MCF 10A (cell line): ENCODE measurements at regions of chr9 and their contacts with region 1.

Region 1: GRCh38 chr9:20593551-20593950 is 28.7 kb downstream of the MLLT3 start:
- DNase-seq: peak; percentile 8
- H3K4me3 Mint-ChIP-seq: no peak overlapping the region
- H3K27ac Mint-ChIP-seq: no peak overlapping the region
- H3K4me1 Mint-ChIP-seq: no peaks in the 10 kb centered on the region
- H3K27me3 Mint-ChIP-seq: peaks cover 10% of the 10 kb centered on the region
- CTCF ChIP-seq: no peak

Region 2: DNA sequence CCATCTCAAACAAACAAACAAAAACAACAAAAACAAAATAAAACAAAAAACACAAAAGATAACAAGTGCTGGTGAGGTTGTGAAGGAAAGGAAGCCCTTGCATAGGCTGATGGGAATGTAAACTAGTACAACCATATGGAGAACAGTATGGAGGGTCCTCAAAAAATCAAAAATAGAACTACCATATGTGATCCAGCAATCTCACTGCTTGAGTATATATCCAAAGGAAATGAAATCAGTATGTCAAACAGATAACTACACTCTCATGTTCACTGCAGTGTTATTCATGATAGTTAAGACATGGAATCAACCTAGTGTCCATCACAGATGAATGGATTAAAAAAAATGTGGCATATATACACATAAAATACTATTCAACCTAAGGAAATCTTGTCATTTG is 409.0 kb before region 1 on chr9:
- CTCF ChIA-PET with region 1: no interaction called
- POLR2A ChIA-PET with region 1: no interaction called
- intact Hi-C with region 1: loop called (anchors 5 kb)
- DNase-seq: no peak
- H3K4me3 Mint-ChIP-seq: no peak overlapping the region
- H3K27ac Mint-ChIP-seq: no peak overlapping the region
- H3K4me1 Mint-ChIP-seq: no peaks in the 10 kb centered on the region
- H3K27me3 Mint-ChIP-seq: no peaks in the 10 kb centered on the region
- CTCF ChIP-seq: no peak